K562 (cell line): ENCODE measurements at regions of chr13 and their contacts with region 1.

Region 1: GRCh38 chr13:26698392-26699196 is 62.0 kb downstream of the GPR12 start:
- DNase-seq: peak; percentile 63 to 73 (median 68)
- ATAC-seq: peak; percentile 88
- H3K4me3 ChIP-seq: no peak overlapping the region
- H3K27ac ChIP-seq: no peak overlapping the region
- H3K4me1 ChIP-seq: no peaks in the 10 kb centered on the region
- H3K27me3 ChIP-seq: no peaks in the 10 kb centered on the region; a peak in 1 of 5 replicates
- CTCF ChIP-seq: peak; percentile 85 to 90 (median 85)
- EP300 ChIP-seq: no peak
- POLR2A ChIP-seq: no peak
- RAD21 ChIP-seq: peak; percentile 58 to 82

Region 2: DNA sequence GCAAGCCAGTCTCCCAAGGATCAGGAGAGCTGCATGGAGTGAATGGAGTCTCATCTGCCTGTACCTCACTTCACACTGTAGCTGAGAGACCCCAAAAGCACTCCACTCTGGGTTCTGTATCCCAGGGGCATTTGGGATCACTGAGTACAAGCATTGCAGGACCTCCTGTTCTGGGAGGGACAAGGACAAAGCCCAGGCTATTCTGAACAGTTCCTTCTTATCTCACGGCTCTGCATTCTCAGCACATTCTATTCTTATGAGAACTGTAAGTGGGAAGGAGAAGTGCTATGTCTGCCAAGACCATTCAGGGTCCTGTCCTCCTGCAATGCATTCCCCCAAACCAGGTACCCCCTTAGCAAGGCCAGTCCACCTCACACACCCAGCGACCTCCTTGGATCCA is 519.2 kb before region 1 on chr13:
- CTCF ChIA-PET with region 1: interaction called, 7 read pairs
- POLR2A ChIA-PET with region 1: interaction called, 3 read pairs
- in situ Hi-C with region 1: loop called (anchors 5 kb)
- intact Hi-C with region 1: loop called (anchors 1 kb)
- DNase-seq: no peak
- ATAC-seq: no peak
- H3K4me3 ChIP-seq: no peak overlapping the region
- H3K27ac ChIP-seq: no peak overlapping the region
- H3K4me1 ChIP-seq: no peaks in the 10 kb centered on the region
- H3K27me3 ChIP-seq: no peaks in the 10 kb centered on the region; a peak in 1 of 5 replicates
- CTCF ChIP-seq: no peak
- EP300 ChIP-seq: no peak
- POLR2A ChIP-seq: no peak
- RAD21 ChIP-seq: no peak

Region 3: GRCh38 chr13:26872525-26873385 is 174.2 kb after region 1 on chr13:
- CTCF ChIA-PET with region 1: no interaction called
- POLR2A ChIA-PET with region 1: no interaction called
- in situ Hi-C with region 1: no loop called
- intact Hi-C with region 1: no loop called
- DNase-seq: peak; percentile 42 to 61 (median 56)
- ATAC-seq: peak; percentile 90
- H3K4me3 ChIP-seq: no peak overlapping the region
- H3K27ac ChIP-seq: no peak overlapping the region
- H3K4me1 ChIP-seq: no peaks in the 10 kb centered on the region
- H3K27me3 ChIP-seq: no peaks in the 10 kb centered on the region
- CTCF ChIP-seq: peak; percentile 70 to 78 (median 76)
- EP300 ChIP-seq: no peak
- POLR2A ChIP-seq: no peak
- RAD21 ChIP-seq: peak; percentile 21 to 66; a peak in 3 of 4 replicates

Region 4: GRCh38 chr13:27236478-27236877 is 537.9 kb after region 1 on chr13:
- CTCF ChIA-PET with region 1: no interaction called
- POLR2A ChIA-PET with region 1: no interaction called
- in situ Hi-C with region 1: no loop called
- intact Hi-C with region 1: no loop called
- DNase-seq: no peak
- ATAC-seq: no peak
- H3K4me3 ChIP-seq: no peak overlapping the region
- H3K27ac ChIP-seq: no peak overlapping the region
- H3K4me1 ChIP-seq: no peaks in the 10 kb centered on the region
- H3K27me3 ChIP-seq: no peaks in the 10 kb centered on the region
- CTCF ChIP-seq: no peak
- EP300 ChIP-seq: no peak
- POLR2A ChIP-seq: no peak
- RAD21 ChIP-seq: no peak